Upper lobe of right lung (tissue), 1 donor: ENCODE measurements at regions of chr16 and their contacts with region 1.

Region 1: DNA sequence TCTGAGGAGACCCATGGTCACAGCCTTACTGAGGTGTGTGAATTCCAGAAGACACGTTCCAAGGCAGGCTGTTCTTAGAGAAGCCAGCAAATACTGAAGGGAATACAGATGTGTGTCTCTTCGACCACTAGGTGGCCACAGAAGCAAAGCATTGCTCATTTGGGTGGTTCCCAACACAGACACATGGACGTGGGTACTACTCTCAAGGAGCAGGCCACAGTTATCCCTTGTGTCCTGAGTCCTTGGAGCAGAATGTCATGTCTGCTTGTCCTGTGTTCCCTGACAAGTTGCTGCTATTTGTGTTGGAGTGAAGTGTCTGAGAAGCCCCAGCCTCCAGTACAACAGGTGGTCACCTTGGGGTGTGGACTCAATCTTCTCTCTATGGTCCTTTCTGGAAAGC is 30.3 kb downstream of the HMOX2 start:
- DNase-seq: no peak
- ATAC-seq: peak; percentile 86
- H3K4me3 ChIP-seq: no peak overlapping the region
- H3K27ac ChIP-seq: peak overlapping the region; percentile 20
- H3K4me1 ChIP-seq: peaks cover 30% of the 10 kb centered on the region
- H3K27me3 ChIP-seq: no peaks in the 10 kb centered on the region
- CTCF ChIP-seq: peak; percentile 84

Region 2: DNA sequence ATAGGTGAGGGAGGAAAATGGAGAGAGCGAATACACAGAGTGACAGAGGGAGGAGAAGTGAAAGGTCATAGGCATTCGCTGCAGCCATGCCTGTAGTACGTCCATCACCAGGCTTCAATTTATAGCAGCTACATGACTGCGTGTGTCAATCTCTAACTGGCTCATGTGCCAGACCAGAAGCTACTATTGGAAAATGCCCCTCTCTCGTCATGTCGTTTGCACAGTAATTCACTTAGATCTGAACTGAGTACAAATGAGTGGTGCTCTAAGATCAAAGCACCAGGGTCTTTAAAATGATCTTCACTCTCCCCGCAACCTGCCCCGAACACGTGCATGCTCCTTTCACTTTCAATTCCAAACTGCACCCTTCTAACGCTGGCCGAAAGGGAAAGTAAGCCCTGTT is 441.5 kb before region 1 on chr16:
- intact Hi-C with region 1: no loop called
- DNase-seq: no peak
- ATAC-seq: peak; percentile 70
- H3K4me3 ChIP-seq: peak overlapping the region; percentile 37
- H3K27ac ChIP-seq: peak overlapping the region; percentile 63
- H3K4me1 ChIP-seq: peaks cover 5% of the 10 kb centered on the region
- H3K27me3 ChIP-seq: no peaks in the 10 kb centered on the region
- CTCF ChIP-seq: no peak

Region 3: DNA sequence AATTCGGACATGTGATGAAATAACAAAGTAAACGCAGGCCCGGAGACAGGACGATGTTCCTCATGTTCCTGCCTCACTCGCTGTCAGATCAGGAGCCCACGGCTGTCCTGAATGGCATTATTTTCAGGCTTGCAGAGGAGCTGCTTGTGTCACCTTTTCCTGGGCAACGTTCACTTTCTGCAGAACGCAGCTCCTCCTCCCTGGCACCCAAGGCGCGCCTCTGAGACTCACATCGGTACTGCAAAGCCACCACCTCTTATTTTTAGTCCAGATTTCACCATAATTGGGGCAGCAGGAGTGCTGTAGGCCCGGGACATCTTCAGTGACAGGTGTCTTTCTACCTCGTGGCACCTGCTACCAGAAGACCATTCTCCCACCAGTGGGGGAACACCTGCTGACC is 41.7 kb after region 1 on chr16:
- intact Hi-C with region 1: loop called (anchors 5 kb)
- DNase-seq: no peak
- ATAC-seq: no peak
- H3K4me3 ChIP-seq: no peak overlapping the region
- H3K27ac ChIP-seq: no peak overlapping the region
- H3K4me1 ChIP-seq: no peaks in the 10 kb centered on the region
- H3K27me3 ChIP-seq: no peaks in the 10 kb centered on the region
- CTCF ChIP-seq: no peak